WTC11 (cell line): ENCODE measurements at regions of chr9 and their contacts with region 1.

Region 1: DNA sequence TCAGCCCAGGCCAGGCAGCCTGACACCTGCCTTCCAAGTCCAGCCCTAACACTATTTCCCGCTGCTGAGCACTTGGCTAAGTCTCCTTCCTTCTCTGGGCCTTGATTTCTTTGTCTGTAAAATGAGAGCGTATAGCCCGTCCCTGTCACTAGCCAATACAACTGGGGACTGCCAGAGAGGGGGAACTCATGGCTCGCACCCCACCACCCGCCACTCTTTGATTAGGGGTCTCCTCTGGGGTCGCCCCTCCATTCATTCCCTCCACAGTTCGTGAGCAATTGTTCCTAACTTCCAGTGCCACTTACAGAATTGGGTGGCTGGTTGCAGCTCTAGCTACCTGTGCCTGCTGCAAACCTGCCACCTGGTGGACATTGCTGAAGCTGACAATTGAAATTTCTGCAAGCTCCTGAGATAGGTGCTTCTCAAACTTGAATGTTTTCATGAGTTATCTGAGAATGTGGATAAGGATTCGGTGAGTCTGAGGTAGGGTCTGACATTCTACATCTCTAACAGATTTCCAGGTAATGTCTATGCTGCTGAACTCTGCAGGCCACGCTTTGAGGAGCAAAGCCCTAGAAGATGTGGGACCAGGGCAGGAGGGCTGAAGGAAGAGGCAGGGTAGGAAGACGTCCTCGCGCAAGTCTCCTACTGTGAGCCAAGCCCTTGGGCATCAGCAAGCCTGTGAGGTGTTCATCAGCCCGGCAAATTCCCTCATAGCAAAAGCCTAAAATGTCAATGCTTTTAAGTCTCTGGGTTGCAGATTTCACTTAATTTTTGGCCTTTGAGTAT is 13.3 kb upstream of the RECK start:
- DNase-seq: peak; percentile 78
- ATAC-seq: peak; percentile 96
- H3K4me3 Mint-ChIP-seq: no peak overlapping the region; the same call in 1 of the 2 replicates
- H3K27ac Mint-ChIP-seq: no peak overlapping the region
- H3K4me1 Mint-ChIP-seq: peaks cover 4% of the 10 kb centered on the region
- H3K27me3 Mint-ChIP-seq: no peaks in the 10 kb centered on the region; the same call in 1 of the 2 replicates
- CTCF ChIP-seq: peak; percentile 81

Region 2: DNA sequence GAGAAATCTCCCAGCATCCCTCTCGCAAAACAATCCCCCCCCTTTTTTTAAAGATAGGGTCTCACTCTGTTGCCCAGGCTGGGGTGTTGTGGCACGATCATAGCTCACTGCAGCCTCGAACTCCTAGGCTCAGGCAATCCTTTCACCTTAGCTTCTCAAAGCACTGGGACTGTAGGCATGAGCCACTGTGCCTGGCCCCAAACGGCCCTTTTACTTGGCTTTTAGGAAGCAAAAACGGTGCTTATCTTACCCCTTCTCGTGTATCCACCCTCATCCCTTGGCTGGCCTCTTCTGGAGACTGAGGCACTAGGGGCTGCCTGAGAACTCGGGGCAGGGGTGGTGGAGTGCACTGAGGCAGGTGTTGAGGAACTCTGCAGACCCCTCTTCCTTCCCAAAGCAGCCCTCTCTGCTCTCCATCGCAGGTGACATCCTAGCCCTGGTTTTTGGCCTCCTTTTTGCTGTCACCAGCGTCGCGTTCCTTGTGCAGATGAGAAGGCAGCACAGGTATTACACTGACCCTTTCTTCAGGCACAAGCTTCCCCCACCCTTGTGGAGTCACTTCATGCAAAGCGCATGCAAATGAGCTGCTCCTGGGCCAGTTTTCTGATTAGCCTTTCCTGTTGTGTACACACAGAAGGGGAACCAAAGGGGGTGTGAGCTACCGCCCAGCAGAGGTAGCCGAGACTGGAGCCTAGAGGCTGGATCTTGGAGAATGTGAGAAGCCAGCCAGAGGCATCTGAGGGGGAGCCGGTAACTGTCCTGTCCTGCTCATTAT is 342.9 kb before region 1 on chr9:
- CTCF ChIA-PET with region 1: no interaction called
- POLR2A ChIA-PET with region 1: no interaction called
- DNase-seq: peak; percentile 70
- ATAC-seq: peak; percentile 79
- H3K4me3 Mint-ChIP-seq: no peak overlapping the region
- H3K27ac Mint-ChIP-seq: peak overlapping the region; percentile 78
- H3K4me1 Mint-ChIP-seq: peaks cover 15% of the 10 kb centered on the region
- H3K27me3 Mint-ChIP-seq: peaks cover 8% of the 10 kb centered on the region
- CTCF ChIP-seq: no peak

Region 3: DNA sequence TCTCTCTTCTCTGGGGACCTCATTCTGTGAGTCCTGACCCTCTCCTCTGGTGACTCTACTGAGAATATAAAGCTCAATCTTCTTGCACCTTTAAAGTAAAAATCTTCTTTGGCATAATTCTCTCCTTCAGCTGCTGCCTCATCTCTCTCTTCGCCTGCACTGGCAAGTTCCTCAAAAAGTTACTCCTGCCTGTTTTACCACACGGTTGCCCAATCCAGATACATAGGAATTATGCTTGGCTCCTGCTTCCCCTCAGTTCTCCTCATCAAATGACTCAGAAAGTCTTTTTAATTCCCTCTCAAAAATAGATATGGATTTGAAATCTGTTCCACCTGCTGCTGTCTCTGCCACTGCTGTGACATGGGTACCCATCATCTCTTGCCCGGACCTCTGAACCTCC is 131.8 kb before region 1 on chr9:
- CTCF ChIA-PET with region 1: no interaction called
- POLR2A ChIA-PET with region 1: no interaction called
- DNase-seq: no peak
- ATAC-seq: no peak
- H3K4me3 Mint-ChIP-seq: no peak overlapping the region
- H3K27ac Mint-ChIP-seq: no peak overlapping the region
- H3K4me1 Mint-ChIP-seq: no peaks in the 10 kb centered on the region
- H3K27me3 Mint-ChIP-seq: no peaks in the 10 kb centered on the region; the same call in 1 of the 2 replicates
- CTCF ChIP-seq: no peak

Region 4: DNA sequence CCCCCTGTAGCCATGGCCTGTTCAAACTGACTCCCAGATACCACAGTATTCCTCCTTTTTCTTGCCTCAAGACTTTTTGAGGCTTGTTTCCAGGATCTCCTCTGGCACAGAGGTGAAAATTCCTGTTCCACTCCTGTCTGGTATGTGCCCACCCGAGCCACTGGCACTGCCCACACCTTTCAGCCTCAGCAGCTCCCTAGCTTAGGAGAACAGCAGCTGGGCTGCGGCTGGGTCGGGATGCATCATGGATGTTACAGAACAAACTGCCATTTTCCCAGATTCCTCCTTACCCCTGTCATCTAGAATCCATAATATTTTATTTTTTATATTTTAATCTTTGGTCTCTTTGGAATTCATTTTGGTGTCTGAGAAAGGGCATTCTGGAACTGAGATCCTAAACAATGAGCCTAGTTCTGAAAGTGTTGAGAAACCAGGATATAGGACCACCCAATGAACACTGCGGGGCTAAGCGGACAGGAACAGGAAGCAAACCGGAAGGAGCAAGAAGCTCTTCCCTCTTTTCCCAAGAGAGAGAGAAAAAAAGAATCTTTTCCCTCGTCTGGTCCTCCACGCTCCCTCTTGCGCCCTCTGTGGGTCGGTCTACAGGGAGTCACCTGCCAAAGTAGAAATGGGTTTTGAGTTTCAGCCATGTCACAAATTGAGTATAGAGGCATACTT is 78.0 kb before region 1 on chr9:
- CTCF ChIA-PET with region 1: interaction called, 15 read pairs
- POLR2A ChIA-PET with region 1: no interaction called
- DNase-seq: peak; percentile 85
- ATAC-seq: peak; percentile 84
- H3K4me3 Mint-ChIP-seq: peak overlapping the region; percentile 57
- H3K27ac Mint-ChIP-seq: no peak overlapping the region; the same call in 1 of the 2 replicates
- H3K4me1 Mint-ChIP-seq: peaks cover 8% of the 10 kb centered on the region; the same call in 1 of the 2 replicates
- H3K27me3 Mint-ChIP-seq: peaks cover 71% of the 10 kb centered on the region
- CTCF ChIP-seq: peak; percentile 56

Region 5: DNA sequence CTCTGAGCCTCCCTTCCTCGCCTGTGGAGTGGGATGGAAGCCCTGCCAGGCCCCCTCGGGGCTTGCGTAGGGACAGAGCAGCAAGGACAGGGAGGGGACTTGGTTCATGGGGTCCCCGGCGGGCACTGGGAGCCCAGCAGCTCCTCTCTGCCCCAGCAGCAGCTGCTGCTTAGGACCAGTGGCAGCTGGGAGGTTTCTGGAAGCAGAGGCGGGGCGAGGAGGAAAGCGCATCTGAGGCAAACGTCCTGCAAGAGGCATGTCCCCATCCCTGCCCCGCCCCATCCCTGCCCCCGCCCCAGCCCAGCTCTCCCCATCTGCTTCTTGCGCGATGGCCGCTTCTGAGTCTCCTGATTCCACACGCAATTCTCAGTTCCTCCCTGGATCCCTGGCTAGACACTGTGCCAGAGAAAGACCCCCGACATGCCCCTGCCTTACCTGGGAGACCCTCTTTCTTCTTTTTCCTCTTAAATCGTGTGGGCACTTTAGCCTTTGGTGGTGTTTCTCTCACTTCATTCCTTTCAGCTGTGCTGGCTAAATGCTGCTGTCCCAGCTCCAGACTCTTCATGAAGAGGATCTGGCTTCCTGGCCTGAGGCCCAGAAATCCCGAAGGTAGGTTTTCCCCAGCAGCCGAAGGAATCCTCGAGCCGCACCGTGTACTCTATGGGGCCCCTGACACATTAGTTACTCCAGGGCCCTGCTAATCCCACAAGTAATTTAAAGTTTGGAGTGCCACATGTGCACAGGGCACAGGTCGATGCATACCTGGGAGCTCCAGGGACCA is 61.1 kb before region 1 on chr9:
- CTCF ChIA-PET with region 1: interaction called, 56 read pairs
- POLR2A ChIA-PET with region 1: no interaction called
- DNase-seq: peak; percentile 29
- ATAC-seq: peak; percentile 77
- H3K4me3 Mint-ChIP-seq: no peak overlapping the region
- H3K27ac Mint-ChIP-seq: no peak overlapping the region
- H3K4me1 Mint-ChIP-seq: peaks cover 5% of the 10 kb centered on the region; the same call in 1 of the 2 replicates
- H3K27me3 Mint-ChIP-seq: peaks cover 33% of the 10 kb centered on the region
- CTCF ChIP-seq: no peak

Region 6: GRCh38 chr9:36008774-36009300 is 14.6 kb before region 1 on chr9:
- CTCF ChIA-PET with region 1: interaction called, 14 read pairs
- POLR2A ChIA-PET with region 1: no interaction called
- DNase-seq: peak; percentile 44
- ATAC-seq: peak; percentile 73
- H3K4me3 Mint-ChIP-seq: no peak overlapping the region
- H3K27ac Mint-ChIP-seq: no peak overlapping the region
- H3K4me1 Mint-ChIP-seq: peaks cover 4% of the 10 kb centered on the region; the same call in 1 of the 2 replicates
- H3K27me3 Mint-ChIP-seq: peaks cover 56% of the 10 kb centered on the region
- CTCF ChIP-seq: peak; percentile 77

Region 7: GRCh38 chr9:36102742-36103495 is 79.5 kb after region 1 on chr9:
- CTCF ChIA-PET with region 1: interaction called, 12 read pairs
- POLR2A ChIA-PET with region 1: no interaction called
- DNase-seq: peak; percentile 86
- ATAC-seq: peak; percentile 95
- H3K4me3 Mint-ChIP-seq: no peak overlapping the region
- H3K27ac Mint-ChIP-seq: peak overlapping the region; percentile 79
- H3K4me1 Mint-ChIP-seq: peaks cover 24% of the 10 kb centered on the region
- H3K27me3 Mint-ChIP-seq: no peaks in the 10 kb centered on the region
- CTCF ChIP-seq: peak; percentile 49

Region 8: DNA sequence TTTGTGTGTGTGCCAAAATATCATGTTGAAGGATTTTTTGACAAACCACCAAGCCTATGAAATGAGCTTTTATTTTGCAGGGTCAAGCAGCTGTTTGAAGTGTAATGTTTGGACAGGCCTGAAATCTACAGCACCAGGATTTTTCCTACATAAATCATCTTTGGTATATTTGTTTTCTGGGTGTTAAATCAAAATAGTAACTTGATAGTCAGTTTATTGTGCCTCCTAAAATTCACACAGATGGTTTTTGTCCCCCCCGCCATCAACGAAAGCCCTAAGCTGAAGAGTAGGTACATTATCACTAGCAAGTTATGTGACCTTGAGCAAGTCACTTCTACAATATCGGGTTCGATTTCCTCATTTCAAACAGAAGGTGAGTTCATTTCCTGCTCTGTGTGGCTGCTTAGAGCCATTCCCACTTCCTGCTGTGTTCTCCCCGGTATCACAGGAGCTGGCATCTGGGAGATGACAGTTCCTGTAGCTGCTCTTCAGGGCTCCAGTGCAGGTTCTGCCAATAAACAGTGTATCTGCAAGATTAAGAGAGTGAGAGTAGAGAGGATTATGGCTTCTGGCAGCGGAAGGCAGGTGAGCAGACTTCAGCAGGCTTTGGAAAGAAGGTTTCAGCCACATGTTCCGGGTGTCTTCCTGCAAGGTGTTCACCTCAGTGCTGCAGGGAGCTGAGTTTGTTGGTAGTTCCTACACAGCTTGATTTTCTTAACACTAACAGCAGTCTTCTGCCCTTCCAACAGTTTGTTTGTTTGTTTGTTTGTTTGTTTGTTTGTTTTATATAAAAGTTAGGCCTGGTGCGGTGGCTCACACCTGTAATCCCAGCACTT is 283.2 kb after region 1 on chr9:
- CTCF ChIA-PET with region 1: no interaction called
- POLR2A ChIA-PET with region 1: no interaction called
- DNase-seq: no peak
- ATAC-seq: peak; percentile 34
- H3K4me3 Mint-ChIP-seq: no peak overlapping the region
- H3K27ac Mint-ChIP-seq: peak overlapping the region; percentile 73
- H3K4me1 Mint-ChIP-seq: peaks cover 5% of the 10 kb centered on the region
- H3K27me3 Mint-ChIP-seq: no peaks in the 10 kb centered on the region
- CTCF ChIP-seq: no peak